ENCODE measurements at regions of chr16 and their contacts with region 1.

Region 1: DNA sequence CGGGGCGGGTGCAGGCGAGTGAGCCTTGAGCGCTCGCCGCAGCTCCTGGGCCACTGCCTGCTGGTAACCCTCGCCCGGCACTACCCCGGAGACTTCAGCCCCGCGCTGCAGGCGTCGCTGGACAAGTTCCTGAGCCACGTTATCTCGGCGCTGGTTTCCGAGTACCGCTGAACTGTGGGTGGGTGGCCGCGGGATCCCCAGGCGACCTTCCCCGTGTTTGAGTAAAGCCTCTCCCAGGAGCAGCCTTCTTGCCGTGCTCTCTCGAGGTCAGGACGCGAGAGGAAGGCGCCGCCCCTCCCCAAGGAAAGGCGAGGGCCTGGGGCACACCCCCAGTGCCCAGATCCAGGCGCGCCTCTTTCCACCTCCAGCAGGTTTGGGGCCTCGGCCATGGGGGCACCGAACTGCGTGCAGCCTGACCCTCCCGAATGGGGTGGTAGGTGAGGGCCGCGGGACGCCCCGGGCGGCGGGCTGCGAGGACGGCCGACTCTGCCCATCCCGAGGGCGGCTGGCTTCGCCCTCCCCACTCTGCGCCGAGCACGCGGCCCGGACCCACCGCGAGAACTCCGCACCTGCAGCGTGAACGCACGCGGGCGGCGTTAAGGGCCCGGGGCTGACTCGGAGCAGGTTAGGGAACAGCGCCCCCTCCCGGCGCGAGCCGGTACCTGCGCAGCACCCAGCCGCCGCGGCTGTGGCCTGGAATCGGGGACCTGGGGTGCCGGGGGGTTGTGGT is 844 bp downstream of the HBQ1 start:
- DNase-seq: peak; percentile 79 to 84 (median 82)
- H3K4me3 ChIP-seq: peak overlapping the region in 1 of 2 donors; percentile 41
- H3K4me3 Mint-ChIP-seq: peak overlapping the region in 4 of 8 donors; percentile 31 to 63 (median 48)
- H3K27ac ChIP-seq: no peak overlapping the region
- H3K27ac Mint-ChIP-seq: peak overlapping the region in 2 of 7 donors; percentile 40 to 70
- H3K4me1 ChIP-seq: peaks cover 21% of the 10 kb centered on the region
- H3K4me1 Mint-ChIP-seq: peaks cover 2 to 16% (median 9%) of the 10 kb centered on the region in 4 donors
- H3K27me3 ChIP-seq: peaks cover 24% of the 10 kb centered on the region
- H3K27me3 Mint-ChIP-seq: peaks cover 12 to 18% of the 10 kb centered on the region in 2 donors

Region 2: GRCh38 chr16:106623-107324 is 74.3 kb before region 1 on chr16:
- CTCF ChIA-PET with region 1: interaction called, 29 read pairs
- POLR2A ChIA-PET with region 1: no interaction called
- intact Hi-C with region 1: loop called (anchors 1 kb)
- DNase-seq: peak in 4 of 5 donors; percentile 61 to 70 (median 66)
- H3K4me3 ChIP-seq: no peak overlapping the region
- H3K4me3 Mint-ChIP-seq: no peak overlapping the region
- H3K27ac ChIP-seq: no peak overlapping the region
- H3K27ac Mint-ChIP-seq: peak overlapping the region in 2 of 7 donors; percentile 11 to 29
- H3K4me1 ChIP-seq: peaks cover 4% of the 10 kb centered on the region
- H3K4me1 Mint-ChIP-seq: peaks cover 1 to 6% (median 4%) of the 10 kb centered on the region in 4 donors
- H3K27me3 ChIP-seq: no peaks in the 10 kb centered on the region
- H3K27me3 Mint-ChIP-seq: no peaks in the 10 kb centered on the region

Region 3: DNA sequence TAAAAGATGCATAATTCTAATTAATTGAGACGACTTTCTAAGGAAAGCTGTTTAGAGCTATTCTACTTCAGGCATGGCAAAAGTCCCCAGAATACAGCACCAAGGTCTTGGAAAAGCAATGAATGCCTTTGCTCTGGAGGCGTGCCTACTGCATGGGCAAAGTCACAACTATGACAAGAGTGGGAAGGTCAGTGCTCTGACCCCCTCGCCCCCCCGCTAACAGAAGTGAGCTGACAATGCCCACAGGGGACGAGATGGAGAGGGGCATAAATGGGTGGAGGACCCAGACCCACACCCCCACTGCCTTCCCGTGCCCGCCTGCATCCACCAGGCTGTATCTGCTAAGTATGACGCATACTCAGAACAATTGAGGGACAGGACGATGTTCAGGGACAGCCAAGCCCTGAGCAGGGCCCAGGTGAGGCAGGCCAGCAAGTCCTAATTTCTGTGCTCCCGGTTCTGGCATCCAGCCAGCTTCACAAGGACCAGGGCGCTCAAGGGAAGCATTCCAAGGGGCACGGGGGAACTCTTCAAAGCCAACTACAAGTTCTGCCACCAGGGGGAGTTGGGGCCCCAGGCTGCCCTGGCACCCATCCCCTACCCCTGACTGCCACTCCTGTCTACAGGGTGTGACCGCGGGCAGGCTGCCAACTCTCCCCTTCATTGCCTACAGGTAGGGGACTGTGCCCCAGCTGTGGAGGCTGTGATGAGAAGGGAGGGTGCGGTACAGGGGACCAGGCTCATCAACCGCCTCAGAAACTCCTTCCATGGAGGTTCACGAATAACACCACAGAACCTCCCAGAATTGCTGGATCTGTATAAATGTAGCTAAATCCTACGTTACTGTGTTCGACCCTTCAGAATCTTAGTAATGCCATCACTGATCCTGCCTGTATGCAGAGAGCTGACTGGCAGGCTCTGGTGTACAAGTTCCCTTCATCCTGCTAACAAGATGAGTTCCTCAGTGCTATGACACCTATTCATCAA is 63.4 kb before region 1 on chr16:
- CTCF ChIA-PET with region 1: interaction called, 23 read pairs
- POLR2A ChIA-PET with region 1: no interaction called
- intact Hi-C with region 1: no loop called
- DNase-seq: peak; percentile 54 to 67 (median 60)
- H3K4me3 ChIP-seq: no peak overlapping the region
- H3K4me3 Mint-ChIP-seq: no peak overlapping the region
- H3K27ac ChIP-seq: no peak overlapping the region
- H3K27ac Mint-ChIP-seq: no peak overlapping the region
- H3K4me1 ChIP-seq: no peaks in the 10 kb centered on the region
- H3K4me1 Mint-ChIP-seq: peaks cover 0 to 5% (median 1%) of the 10 kb centered on the region in 4 donors
- H3K27me3 ChIP-seq: no peaks in the 10 kb centered on the region
- H3K27me3 Mint-ChIP-seq: no peaks in the 10 kb centered on the region

Region 4: GRCh38 chr16:138049-138417 is 43.1 kb before region 1 on chr16:
- CTCF ChIA-PET with region 1: no interaction called
- POLR2A ChIA-PET with region 1: no interaction called
- intact Hi-C with region 1: loop called (anchors 2 kb)
- DNase-seq: peak; percentile 15 to 46 (median 27)
- H3K4me3 ChIP-seq: peak overlapping the region in 1 of 2 donors; percentile 47
- H3K4me3 Mint-ChIP-seq: peak overlapping the region; percentile 77 to 87 (median 83)
- H3K27ac ChIP-seq: peak overlapping the region; percentile 47
- H3K27ac Mint-ChIP-seq: peak overlapping the region; percentile 31 to 82 (median 74)
- H3K4me1 ChIP-seq: peaks cover 14% of the 10 kb centered on the region
- H3K4me1 Mint-ChIP-seq: peaks cover 14 to 30% (median 21%) of the 10 kb centered on the region in 4 donors
- H3K27me3 ChIP-seq: no peaks in the 10 kb centered on the region
- H3K27me3 Mint-ChIP-seq: no peaks in the 10 kb centered on the region

Measured in CD4-positive, alpha-beta memory T cell (primary cell).